A673 (cell line): ENCODE measurements at regions of chr2 and their contacts with region 1.

Region 1: GRCh38 chr2:8479298-8479697 is 202.6 kb upstream of the ID2 start:
- DNase-seq: no peak
- H3K4me3 ChIP-seq: no peak overlapping the region
- H3K27ac ChIP-seq: no peak overlapping the region
- H3K4me1 ChIP-seq: peaks cover 11% of the 10 kb centered on the region
- H3K27me3 ChIP-seq: no peaks in the 10 kb centered on the region
- CTCF ChIP-seq: no peak

Region 2: DNA sequence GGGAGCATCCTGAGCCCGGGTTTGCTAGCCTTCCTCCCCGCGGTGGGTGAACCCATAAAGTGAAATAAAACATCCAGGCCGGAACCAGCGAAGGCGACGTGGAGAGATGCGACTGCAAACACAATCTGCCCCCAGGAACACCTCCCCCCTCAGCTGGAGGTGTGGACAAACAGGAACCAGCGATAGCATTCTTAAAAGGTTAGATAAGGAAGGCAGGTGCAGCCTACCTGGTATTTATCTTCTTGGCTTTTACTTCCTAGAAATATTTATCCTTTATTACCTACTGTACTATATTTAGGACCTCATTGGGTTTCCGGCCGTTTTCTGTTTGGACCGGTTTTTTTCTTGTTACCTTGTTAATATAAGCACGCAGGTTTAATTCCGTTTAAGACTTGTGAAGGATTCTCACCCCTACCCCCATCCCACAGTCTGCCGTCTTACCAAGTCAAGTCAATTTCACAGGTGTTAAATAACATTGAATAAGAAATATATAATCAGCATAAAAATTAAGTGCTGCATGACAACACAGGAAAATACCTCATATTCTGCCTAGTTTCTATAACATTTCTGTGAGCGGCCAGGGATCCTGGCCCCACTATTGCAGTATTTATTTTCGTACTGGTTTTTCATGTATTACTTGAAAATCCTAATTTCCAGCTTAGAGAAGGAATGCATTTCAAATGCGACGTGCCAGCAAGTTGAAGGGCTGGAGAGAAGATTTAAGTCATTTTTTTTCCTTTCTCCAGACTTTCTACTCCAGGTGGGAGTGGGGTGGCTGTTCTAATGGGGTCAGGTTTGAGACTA is 21.4 kb before region 1 on chr2:
- CTCF ChIA-PET with region 1: no interaction called
- POLR2A ChIA-PET with region 1: no interaction called
- intact Hi-C with region 1: loop called (anchors 1 kb)
- DNase-seq: no peak
- H3K4me3 ChIP-seq: no peak overlapping the region
- H3K27ac ChIP-seq: no peak overlapping the region
- H3K4me1 ChIP-seq: no peaks in the 10 kb centered on the region
- H3K27me3 ChIP-seq: no peaks in the 10 kb centered on the region
- CTCF ChIP-seq: no peak